ENCODE measurements at regions of chr11 and their contacts with region 1.

Region 1: DNA sequence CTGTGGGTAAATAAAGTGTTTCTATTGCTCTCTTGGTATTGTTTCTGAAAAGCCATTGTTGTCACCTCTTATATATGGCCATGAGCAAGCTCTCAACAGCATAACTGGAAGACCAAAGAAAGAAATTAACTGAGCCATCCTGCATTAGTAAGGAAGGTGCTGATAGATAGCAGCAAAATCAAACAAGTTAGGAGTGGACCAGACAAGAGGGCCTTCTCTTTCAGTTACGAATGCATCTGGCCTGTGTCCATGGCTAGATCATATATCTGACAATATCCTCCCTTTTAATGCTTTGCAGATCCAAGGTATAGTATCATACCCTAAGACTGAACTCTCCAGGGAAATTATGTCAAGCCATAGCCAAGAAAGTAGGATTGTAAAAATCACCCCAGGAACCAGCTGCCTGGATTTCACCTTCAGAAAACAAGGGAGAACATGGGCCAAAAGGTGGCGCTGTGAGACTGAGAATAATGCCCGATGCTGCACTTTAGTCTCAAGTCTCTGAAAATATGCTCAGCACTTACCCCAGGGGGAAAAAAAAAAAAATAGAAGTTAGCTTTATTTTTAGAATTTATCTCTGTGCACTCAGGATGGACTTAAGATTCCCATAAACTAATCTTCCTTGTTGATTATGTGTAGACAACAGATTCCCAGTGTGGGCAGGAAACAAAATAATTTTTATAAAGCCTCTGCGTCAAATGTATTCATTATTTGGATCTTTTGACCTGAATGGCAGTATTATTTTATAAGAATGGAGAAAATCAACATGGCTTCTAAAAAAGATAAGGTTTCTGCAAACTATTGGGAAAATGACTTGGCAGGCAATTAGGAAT is 415.1 kb downstream of the ETS1 start:
- DNase-seq: peak; percentile 94
- ATAC-seq: peak; percentile 84
- H3K4me3 Mint-ChIP-seq: no peak overlapping the region
- H3K27ac Mint-ChIP-seq: no peak overlapping the region
- H3K4me1 Mint-ChIP-seq: peaks cover 22% of the 10 kb centered on the region
- H3K27me3 Mint-ChIP-seq: peaks cover 5% of the 10 kb centered on the region

Region 2: GRCh38 chr11:128026596-128026995 is 145.7 kb before region 1 on chr11:
- CTCF ChIA-PET with region 1: interaction called, 5 read pairs
- POLR2A ChIA-PET with region 1: no interaction called
- intact Hi-C with region 1: loop called in 1 of 2 experiments (anchors 1 kb)
- DNase-seq: no peak
- ATAC-seq: no peak
- H3K4me3 Mint-ChIP-seq: no peak overlapping the region
- H3K27ac Mint-ChIP-seq: no peak overlapping the region
- H3K4me1 Mint-ChIP-seq: peaks cover 8% of the 10 kb centered on the region
- H3K27me3 Mint-ChIP-seq: no peaks in the 10 kb centered on the region

Region 3: DNA sequence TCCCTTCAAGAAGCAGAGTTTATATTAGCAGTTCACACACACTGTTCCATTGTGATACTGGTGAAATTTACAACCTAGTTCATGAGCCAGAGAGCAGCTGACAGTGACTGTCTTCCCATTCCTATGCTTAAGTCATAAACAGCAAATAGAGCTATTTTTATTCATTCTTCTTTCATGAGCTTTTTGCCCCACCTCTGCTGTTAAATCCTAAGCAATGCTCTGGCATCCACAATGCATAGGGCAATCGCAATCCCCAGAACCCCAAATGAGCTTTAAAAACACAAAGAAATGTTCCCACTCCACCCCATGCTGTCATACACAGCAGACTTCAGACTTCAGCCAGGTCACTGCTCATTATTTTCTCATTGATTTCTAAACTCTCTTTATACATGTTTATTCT is 107.6 kb after region 1 on chr11:
- CTCF ChIA-PET with region 1: interaction called, 20 read pairs
- POLR2A ChIA-PET with region 1: no interaction called
- intact Hi-C with region 1: no loop called
- DNase-seq: no peak
- ATAC-seq: no peak
- H3K4me3 Mint-ChIP-seq: no peak overlapping the region
- H3K27ac Mint-ChIP-seq: no peak overlapping the region
- H3K4me1 Mint-ChIP-seq: peaks cover 20% of the 10 kb centered on the region
- H3K27me3 Mint-ChIP-seq: no peaks in the 10 kb centered on the region

Region 4: GRCh38 chr11:128506999-128507611 is 334.8 kb after region 1 on chr11:
- CTCF ChIA-PET with region 1: interaction called, 9 read pairs
- POLR2A ChIA-PET with region 1: no interaction called
- intact Hi-C with region 1: loop called (anchors 5 kb)
- DNase-seq: peak; percentile 80
- ATAC-seq: peak; percentile 58
- H3K4me3 Mint-ChIP-seq: peak overlapping the region; percentile 96
- H3K27ac Mint-ChIP-seq: peak overlapping the region; percentile 98
- H3K4me1 Mint-ChIP-seq: peaks cover 89% of the 10 kb centered on the region
- H3K27me3 Mint-ChIP-seq: no peaks in the 10 kb centered on the region

Region 5: GRCh38 chr11:128776424-128777284 is 604.4 kb after region 1 on chr11:
- CTCF ChIA-PET with region 1: interaction called, 3 read pairs
- POLR2A ChIA-PET with region 1: interaction called, 3 read pairs
- intact Hi-C with region 1: loop called in 1 of 2 experiments (anchors 2 kb)
- DNase-seq: peak; percentile 59
- ATAC-seq: peak; percentile 74
- H3K4me3 Mint-ChIP-seq: no peak overlapping the region
- H3K27ac Mint-ChIP-seq: peak overlapping the region; percentile 43
- H3K4me1 Mint-ChIP-seq: peaks cover 47% of the 10 kb centered on the region
- H3K27me3 Mint-ChIP-seq: no peaks in the 10 kb centered on the region

Region 6: DNA sequence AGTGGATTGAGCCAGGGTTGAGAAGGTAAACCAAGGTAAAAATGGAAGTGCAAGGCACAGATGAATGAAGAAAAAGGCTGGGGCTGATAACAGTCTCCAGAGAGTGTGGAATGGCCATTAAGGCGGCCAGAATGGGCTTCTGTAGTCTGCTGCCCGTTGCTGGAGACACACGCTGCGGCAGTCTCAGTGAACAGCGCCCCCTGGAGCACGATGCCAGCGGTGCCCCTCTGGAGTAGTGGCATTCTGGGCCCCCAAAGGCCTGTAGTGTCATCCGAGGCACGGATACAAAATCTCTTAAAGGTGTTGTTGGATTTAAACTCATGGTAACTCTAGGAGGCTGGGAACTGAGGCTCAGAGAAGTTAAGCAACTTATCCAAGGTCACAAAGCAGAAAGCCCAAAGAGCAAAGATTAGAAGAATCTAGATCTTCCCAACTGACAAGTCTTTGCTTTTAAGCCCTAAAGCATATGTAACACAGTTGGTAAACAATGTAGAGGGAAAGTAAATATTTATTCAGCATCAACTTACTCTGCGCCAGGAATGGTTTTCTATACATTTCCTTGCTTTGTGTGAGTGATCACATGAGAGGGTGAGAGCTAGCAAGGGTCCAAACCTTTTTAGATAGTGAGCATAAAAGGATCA is 676.7 kb after region 1 on chr11:
- CTCF ChIA-PET with region 1: interaction called, 3 read pairs
- POLR2A ChIA-PET with region 1: no interaction called
- intact Hi-C with region 1: loop called in 1 of 2 experiments (anchors 5 kb)
- DNase-seq: peak; percentile 84
- ATAC-seq: peak; percentile 85
- H3K4me3 Mint-ChIP-seq: no peak overlapping the region
- H3K27ac Mint-ChIP-seq: no peak overlapping the region
- H3K4me1 Mint-ChIP-seq: peaks cover 18% of the 10 kb centered on the region
- H3K27me3 Mint-ChIP-seq: no peaks in the 10 kb centered on the region

Region 7: DNA sequence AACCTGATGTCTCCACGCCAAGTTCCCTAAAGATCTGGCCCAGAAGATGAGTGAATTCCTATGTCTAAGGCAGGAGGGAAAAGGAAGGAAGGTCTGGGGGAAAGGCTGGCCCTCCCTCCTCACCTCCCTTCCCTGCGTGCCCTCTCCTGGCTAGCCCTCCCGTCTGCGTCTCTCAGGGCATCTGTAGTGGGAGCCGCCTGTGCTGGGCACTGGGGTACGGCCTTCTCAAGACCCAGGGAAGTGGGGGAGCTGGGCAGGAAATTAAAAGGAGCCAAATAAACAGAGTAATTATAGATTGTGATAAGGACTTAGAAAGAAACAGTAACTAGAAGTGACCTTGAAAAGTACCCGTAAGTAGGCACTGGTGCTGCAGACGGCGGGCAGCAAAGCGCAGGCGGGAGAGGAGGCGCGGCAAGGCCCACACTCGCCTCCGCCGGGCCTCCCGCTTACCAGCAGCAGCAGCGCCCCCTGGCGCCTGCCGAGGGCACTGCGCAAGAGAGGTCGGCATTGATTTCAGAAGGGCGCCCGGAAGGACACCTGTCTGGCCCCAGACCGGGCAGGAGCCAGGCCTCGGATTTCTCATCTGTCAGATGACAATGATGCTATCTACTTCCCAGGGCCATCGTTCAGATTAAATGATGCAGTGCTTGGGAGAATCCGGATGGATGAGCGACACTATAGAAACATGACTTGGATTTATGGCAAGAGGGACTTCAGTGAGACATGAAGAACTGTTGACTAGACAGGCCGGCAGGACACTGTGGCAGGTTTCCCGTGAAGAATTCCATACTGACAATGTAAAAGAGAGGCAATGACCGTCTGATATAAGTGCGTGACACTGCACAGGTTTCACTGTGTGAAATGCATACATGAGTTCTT is 687.5 kb after region 1 on chr11:
- CTCF ChIA-PET with region 1: interaction called, 6 read pairs
- POLR2A ChIA-PET with region 1: no interaction called
- intact Hi-C with region 1: loop called (anchors 1 to 5 kb)
- DNase-seq: peak; percentile 89
- ATAC-seq: peak; percentile 96
- H3K4me3 Mint-ChIP-seq: no peak overlapping the region
- H3K27ac Mint-ChIP-seq: no peak overlapping the region
- H3K4me1 Mint-ChIP-seq: peaks cover 4% of the 10 kb centered on the region
- H3K27me3 Mint-ChIP-seq: no peaks in the 10 kb centered on the region

Measured in activated CD4-positive, alpha-beta T cell treated with anti-CD3 and anti-CD28 coated beads for 36 hours (primary cell).